Motor neuron (in vitro differentiated cells): ENCODE measurements at regions of chr19 and their contacts with region 1.

Region 1: DNA sequence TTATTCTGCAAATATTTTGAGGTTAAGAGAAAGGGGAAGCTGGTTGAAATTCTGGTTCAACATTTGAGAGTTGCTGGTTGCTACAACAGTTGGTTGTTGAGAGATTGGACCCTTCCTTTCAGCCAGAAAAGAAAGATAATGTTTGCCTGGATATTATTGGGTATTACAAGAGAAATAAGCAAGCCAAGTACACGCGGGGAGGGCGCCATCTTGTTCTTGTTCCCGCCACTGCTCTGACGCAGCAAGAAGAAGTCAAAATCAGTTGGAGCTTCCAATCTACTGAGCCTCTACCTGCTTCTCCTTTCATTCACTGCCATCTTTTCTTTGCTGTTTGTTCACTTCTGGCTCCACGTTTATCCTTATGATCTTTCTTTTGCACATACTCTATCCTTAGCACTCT is 18.4 kb downstream of the BSPH1 start:
- ATAC-seq: no peak
- H3K4me3 ChIP-seq: no peak overlapping the region
- H3K27ac ChIP-seq: no peak overlapping the region
- H3K4me1 ChIP-seq: no peaks in the 10 kb centered on the region

Region 2: GRCh38 chr19:48085904-48086864 is 112.7 kb after region 1 on chr19:
- in situ Hi-C with region 1: loop called in 1 of 9 experiments (anchors 25 kb)
- ATAC-seq: no peak
- H3K4me3 ChIP-seq: no peak overlapping the region
- H3K27ac ChIP-seq: no peak overlapping the region
- H3K4me1 ChIP-seq: no peaks in the 10 kb centered on the region

Region 3: DNA sequence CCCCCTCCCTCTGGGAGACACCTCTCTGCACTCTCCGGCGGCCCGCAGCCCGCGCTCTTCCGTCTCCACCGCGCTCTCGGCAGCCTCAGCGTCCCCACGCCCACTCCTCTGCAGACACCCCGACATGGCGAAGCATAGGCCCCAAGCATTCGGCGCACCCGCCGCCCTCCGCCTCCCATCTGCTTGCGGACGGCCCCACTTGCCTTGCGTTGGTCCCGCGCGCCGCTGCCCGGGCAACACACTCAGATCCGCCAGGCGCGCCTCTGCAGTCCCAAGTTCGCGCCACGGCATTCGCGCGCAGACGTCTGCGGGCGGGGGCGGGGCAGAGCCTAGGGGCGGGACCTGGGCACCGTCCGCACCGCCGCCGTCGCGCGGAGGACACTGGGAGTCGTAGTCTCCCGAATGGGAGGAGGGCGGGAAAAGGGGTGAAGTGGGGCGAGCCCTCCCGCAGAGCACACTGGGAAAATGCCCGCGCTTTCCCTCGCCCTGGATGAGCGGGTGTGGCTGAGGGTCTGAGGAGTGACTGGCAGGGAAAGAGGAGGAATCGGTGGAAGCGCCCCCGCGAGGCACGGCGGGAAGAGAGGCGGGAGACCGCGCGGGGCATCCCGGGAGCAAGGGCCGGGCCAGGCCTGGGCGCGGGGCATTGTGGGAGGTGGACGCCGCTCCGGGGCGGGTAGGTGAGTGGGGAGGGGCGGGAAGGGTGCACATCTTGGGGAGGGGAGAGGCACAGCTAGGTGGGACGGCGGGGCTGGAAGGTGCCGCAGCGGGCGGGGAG is 196.7 kb after region 1 on chr19 and contains the starts of genes LIG1 and ZSWIM9:
- in situ Hi-C with region 1: loop called in 3 of 9 experiments (anchors 25 kb)
- ATAC-seq: peak; percentile 87 to 94 (median 90)
- H3K4me3 ChIP-seq: peak within 1 kb of the TSS; percentile 58 to 77 (median 68)
- H3K27ac ChIP-seq: peak within 1 kb of the TSS; percentile 91 to 94
- H3K4me1 ChIP-seq: peaks cover 8% of the 10 kb centered on the region in 2 donors
- total RNA-seq, gene LIG1: 12.8 to 54.4 (median 24.0) TPM
- total RNA-seq, gene ZSWIM9: 1.1 to 3.9 (median 2.4) TPM

Region 4: DNA sequence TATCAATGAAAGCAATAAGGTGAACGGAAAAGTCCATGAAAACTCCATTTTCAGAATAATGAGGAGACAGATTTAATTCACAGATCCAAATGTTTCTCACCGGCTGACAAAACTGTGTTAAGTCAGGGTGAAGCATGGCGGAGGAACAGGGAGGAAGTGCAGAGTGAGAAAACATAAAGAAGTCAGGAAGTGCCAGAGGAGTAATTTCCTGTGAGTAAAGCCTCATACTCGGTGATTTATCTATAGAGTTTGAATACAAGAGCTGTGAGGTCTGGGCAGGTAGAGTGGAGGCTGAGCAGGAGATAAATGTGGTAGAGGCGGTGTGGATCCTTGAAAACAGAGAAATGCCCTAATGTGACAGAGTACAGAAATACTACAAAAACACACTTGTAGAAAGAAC is 270.8 kb after region 1 on chr19:
- in situ Hi-C with region 1: no loop called
- ATAC-seq: no peak
- H3K4me3 ChIP-seq: no peak overlapping the region
- H3K27ac ChIP-seq: no peak overlapping the region
- H3K4me1 ChIP-seq: no peaks in the 10 kb centered on the region

Region 5: GRCh38 chr19:48255376-48256303 is 282.1 kb after region 1 on chr19 and contains the start of gene CARD8:
- in situ Hi-C with region 1: loop called in 4 of 9 experiments (anchors 25 kb)
- ATAC-seq: peak; percentile 63 to 96 (median 80)
- H3K4me3 ChIP-seq: peak within 1 kb of the TSS; percentile 51 to 96 (median 73)
- H3K27ac ChIP-seq: peak within 1 kb of the TSS; percentile 77 to 89
- H3K4me1 ChIP-seq: peaks cover 5 to 11% of the 10 kb centered on the region in 2 donors
- total RNA-seq, gene CARD8: 12.3 to 35.1 (median 16.8) TPM